Activated naive CD4-positive, alpha-beta T cell treated with anti-CD3 and anti-CD28 coated beads, Interleukin-2, amount 10 ng/mL, durations not matched to agents 7 days and 5 days (primary cell): ENCODE measurements at regions of chr17 and their contacts with region 1.

Region 1: DNA sequence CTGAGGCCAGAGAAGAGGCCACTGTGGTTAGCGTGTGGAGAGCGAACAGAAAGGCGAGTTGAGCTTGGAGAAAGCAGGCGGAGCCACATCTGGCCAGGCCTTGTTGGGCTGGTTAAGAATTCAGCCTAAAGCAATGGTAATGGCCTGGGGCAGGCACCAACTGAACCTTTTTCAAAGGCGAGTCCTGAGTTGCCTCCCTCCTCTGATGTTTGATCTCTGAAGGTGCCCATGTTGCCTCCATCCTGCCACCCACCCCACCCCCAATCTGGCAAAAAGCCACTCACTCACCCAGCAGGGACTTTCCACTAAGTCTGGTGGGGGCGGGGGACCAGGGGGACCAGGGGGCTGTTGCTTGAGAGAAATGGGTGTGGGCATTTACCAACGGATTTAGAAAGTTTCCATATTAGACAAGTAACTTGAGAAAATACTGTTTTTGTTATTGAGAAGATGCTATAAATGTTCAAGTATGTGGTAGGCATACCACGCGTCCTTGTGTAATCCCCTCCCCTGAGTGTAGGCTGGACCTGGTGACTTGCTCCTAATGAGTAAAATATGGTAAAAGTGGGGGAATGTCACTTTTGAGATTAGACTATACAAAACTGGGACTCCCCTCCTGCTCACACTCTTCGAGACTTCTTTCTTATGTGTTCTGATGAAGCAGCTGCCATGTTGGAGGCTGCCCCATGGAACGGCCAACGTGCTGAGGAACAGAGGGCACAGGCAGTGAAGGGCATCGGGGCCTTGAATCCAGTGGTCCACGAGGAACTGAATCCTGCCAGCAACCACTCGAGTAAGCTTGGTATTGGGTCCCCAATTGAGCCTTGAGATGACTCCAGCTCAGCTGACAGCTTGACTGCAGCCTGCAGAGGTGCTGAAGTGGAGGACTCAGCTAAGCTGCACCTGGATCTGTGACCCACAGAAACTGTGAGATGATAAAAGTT is 29.9 kb upstream of the TNS4 start:
- DNase-seq: peak; percentile 72
- H3K4me3 Mint-ChIP-seq: no peak overlapping the region
- H3K27ac Mint-ChIP-seq: peak overlapping the region; percentile 95
- H3K4me1 Mint-ChIP-seq: peaks cover 93% of the 10 kb centered on the region
- H3K27me3 Mint-ChIP-seq: peaks cover 8% of the 10 kb centered on the region

Region 2: DNA sequence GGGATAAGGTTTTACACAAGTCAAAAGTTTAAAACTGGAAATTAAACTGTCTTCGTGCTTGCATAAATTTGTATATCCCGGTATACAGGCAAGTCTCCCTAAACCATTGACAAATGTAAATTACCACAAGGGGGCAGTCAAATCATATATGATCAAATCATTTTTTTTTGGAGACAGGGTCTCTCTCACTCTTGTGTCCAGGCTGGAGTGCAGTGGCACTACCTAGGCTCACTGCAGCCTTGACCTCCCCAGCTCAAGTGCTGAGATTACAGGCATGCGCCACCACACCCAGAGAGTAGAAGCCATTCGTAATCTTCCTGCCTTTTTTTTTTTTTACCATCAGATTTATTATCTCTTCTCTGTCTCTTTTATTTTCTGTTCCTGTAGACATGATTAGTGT is 132.1 kb before region 1 on chr17:
- CTCF ChIA-PET with region 1: interaction called, 12 read pairs
- DNase-seq: no peak
- H3K4me3 Mint-ChIP-seq: no peak overlapping the region
- H3K27ac Mint-ChIP-seq: peak overlapping the region; percentile 82
- H3K4me1 Mint-ChIP-seq: peaks cover 36% of the 10 kb centered on the region
- H3K27me3 Mint-ChIP-seq: no peaks in the 10 kb centered on the region

Region 3: DNA sequence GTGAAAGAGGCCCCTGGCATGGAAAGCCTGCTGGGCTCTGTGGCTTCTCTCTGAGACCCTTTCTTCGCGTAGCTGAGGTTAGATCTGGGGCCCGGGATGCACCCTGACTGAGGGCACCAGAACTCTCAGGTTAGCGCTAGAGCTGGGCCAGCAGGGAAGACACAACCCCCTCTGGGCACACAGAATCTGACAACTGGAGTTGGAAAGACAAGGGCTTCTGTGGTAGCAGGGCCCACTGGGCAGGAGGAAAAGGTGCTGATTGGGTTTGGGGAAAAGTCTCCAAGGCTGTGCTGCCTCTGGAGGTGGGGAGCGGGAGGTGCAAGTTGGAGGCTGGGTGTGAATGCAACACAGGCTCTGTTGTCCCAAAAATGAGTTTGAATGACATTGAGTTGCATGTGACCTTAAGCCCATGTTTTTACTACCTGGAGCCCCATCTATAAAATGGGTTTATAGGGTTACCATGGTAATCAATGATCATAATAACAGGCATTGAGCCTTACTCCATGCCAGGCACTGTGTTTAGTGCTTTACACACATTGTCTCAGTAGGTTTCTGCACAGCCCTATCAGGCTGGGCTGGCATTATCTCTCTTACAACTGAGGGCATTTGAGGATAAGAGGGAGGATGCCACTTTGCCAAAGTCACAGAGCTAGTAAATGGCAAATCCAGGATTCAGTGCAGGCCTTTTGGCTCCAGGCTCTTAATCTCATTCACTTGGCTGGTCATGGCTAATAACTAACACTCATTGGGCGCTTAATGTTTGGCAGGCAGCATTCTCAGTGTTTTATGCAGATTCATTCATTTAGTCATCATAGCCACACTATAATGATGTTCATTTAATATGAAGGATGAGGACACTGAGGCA is 97.5 kb before region 1 on chr17:
- CTCF ChIA-PET with region 1: interaction called, 73 read pairs
- DNase-seq: peak; percentile 57
- H3K4me3 Mint-ChIP-seq: no peak overlapping the region
- H3K27ac Mint-ChIP-seq: no peak overlapping the region
- H3K4me1 Mint-ChIP-seq: peaks cover 17% of the 10 kb centered on the region
- H3K27me3 Mint-ChIP-seq: peaks cover 66% of the 10 kb centered on the region

Region 4: GRCh38 chr17:40450175-40450574 is 81.1 kb before region 1 on chr17:
- CTCF ChIA-PET with region 1: interaction called, 73 read pairs
- DNase-seq: peak; percentile 62
- H3K4me3 Mint-ChIP-seq: no peak overlapping the region
- H3K27ac Mint-ChIP-seq: no peak overlapping the region
- H3K4me1 Mint-ChIP-seq: peaks cover 45% of the 10 kb centered on the region
- H3K27me3 Mint-ChIP-seq: peaks cover 14% of the 10 kb centered on the region

Region 5: GRCh38 chr17:40480501-40481003 is 50.8 kb before region 1 on chr17:
- CTCF ChIA-PET with region 1: interaction called, 75 read pairs
- DNase-seq: peak; percentile 92
- H3K4me3 Mint-ChIP-seq: peak overlapping the region; percentile 44
- H3K27ac Mint-ChIP-seq: peak overlapping the region; percentile 96
- H3K4me1 Mint-ChIP-seq: peaks cover 99% of the 10 kb centered on the region
- H3K27me3 Mint-ChIP-seq: no peaks in the 10 kb centered on the region

Region 6: DNA sequence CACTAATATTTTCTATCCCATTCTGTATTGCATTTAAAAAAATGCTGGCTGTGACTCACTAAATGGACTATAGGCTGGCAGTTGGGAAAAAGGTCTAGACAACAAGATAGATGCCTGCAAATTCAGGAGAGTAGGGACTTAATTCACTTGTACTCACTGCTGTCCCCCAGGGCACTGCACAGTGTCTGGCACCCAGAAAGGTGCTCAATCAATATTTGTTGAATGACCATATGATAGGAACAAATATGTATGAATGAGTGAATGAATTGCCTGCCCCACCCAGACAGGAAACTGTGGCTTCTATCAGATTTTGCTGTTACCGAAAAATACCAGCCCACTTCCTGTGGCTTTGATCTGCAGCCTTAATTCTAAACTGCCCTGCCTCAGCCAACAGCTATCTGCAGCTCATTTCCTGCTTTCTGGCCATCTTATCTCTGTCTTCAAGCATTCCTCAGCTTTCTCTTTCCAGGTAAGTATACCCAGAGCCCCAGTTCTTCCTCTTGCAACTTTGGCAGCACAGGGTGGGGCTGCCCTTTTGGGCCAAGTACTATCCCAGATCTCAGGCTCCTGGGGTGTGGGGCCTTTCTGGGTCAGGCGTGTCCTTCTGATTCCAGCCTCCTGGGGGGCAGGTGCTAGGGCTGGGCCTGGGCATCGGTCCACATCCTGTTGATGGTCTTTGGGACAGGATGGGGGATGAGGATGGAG is 14.6 kb before region 1 on chr17:
- CTCF ChIA-PET with region 1: interaction called, 79 read pairs
- DNase-seq: peak; percentile 86
- H3K4me3 Mint-ChIP-seq: peak overlapping the region; percentile 81
- H3K27ac Mint-ChIP-seq: peak overlapping the region; percentile 94
- H3K4me1 Mint-ChIP-seq: peaks cover 84% of the 10 kb centered on the region
- H3K27me3 Mint-ChIP-seq: no peaks in the 10 kb centered on the region

Region 7: DNA sequence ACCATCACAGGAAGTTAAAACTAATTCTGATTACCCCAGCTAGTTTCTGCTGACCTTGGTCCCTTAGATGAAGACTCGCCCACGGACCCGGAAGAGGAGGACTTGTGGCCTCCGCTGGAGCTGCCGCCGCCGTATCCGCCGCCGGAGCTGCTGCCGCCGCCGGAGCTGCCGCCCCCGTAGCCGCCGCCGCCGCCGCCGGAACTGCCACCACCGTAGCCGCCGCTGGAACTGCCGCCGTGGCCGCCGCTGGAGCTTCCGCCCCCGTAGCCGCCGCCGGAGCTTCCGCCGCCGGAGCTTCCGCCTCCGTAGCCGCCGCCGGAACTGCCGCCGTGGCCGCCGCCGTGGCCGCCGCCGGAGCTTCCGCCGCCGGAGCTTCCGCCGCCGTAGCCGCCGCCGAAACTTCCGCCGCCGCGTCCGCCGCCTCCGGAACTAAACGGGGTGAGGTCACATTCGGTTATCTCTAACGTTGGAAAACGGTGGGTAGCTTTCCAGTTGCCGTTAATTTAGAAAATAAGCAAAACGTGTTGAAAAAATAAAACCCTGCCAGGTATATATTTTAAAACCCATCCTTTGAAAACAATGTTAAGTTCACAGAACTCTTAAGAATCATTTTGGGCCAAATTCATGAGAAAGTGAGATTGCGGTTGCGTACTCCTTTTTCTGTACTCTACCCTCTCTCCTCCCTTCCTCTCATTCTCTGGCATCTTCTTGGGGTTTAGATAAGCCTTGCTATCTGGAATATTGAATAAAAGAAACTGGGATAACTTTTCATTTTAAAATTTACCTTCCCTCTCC is 287.6 kb after region 1 on chr17:
- CTCF ChIA-PET with region 1: no interaction called
- DNase-seq: peak; percentile 86
- H3K4me3 Mint-ChIP-seq: peak overlapping the region; percentile 82
- H3K27ac Mint-ChIP-seq: peak overlapping the region; percentile 96
- H3K4me1 Mint-ChIP-seq: peaks cover 29% of the 10 kb centered on the region
- H3K27me3 Mint-ChIP-seq: peaks cover 14% of the 10 kb centered on the region